Mucosa of descending colon (tissue), 3 donors: ENCODE measurements at regions of chr5 and their contacts with region 1.

Region 1: GRCh38 chr5:32329308-32329834 is 16.6 kb upstream of the MTMR12 start:
- DNase-seq: peak in 2 of 3 donors; percentile 72 to 82
- ATAC-seq: peak; percentile 77
- H3K4me3 ChIP-seq: no peak overlapping the region
- H3K4me1 ChIP-seq: peaks cover 10% of the 10 kb centered on the region
- CTCF ChIP-seq: peak; percentile 37

Region 2: DNA sequence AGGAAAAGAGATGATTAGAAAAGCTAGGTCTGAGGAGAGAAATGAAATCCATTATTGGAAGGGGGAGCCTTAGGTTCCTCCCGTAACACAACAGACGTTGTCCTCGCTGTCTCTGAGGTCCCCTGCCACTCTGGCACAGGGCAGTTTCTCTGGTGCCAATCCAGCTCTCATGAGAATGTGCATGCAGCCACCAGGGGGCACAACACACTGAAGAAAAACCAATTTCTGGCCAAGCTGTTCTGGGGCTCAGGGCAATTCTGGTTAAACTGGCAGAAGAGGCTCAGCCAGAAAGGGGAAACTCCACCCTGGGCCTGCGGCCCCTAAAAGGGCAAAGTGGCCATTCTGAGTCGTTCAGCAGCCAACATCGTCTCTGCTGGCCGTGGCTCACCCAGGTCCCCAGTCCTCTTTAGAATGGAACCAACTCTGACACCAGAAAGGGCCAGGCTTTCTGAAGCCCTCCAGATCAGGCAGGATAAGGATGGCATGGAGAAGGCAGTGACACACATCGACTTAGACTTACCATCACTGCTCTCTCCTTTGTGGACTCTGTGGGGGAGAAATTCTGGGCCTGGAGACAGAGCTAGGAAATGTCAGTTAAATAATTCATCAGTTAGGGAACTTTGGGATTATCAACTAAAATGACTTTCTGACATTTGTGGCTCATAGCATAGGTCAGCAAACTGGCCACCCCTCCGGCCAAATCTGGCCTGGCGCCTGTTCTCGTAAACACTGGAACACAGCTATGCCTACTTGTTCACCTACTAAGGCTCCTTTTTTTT is 96.7 kb before region 1 on chr5:
- intact Hi-C with region 1: loop called in 1 of 2 experiments (anchors 2 kb)
- DNase-seq: peak; percentile 68 to 90 (median 84)
- ATAC-seq: peak; percentile 89
- H3K4me3 ChIP-seq: no peak overlapping the region
- H3K4me1 ChIP-seq: peaks cover 13% of the 10 kb centered on the region
- CTCF ChIP-seq: peak; percentile 72